ENCODE measurements at regions of chr11 and their contacts with region 1.

Region 1: DNA sequence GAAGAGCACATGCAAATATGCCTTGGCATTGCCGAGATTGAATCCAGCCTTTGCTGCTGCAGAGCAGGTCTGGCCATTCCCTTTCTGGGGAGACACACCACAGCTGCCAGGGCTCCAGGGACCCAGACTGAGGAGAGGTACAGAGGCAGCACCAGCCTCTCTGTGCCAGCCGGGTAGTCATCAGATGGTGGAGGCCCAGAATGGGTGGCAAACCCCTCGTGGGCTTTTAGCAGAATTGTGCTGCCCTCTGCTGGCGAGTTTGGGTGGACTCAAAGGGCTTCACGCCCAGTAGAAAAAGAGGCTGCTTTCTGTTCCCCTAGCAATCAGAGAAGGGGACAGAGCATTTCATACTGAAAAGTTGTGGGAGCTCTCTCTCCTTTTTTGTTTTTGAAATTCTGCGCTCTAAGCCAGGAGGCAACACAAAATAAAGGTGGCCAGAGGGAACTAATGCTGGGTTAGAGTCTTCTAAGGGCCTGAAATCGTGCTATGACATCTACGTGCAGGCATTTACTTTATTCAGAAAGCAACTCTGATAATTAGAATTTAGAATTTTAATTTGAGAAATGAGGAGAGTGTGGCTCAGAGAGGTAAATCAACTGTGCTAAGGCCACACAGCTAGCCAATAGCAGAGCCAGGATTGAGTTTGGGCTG is 158.8 kb upstream of the NAV2 start:
- DNase-seq: peak; percentile 89
- H3K4me3 Mint-ChIP-seq: no peak overlapping the region
- H3K27ac Mint-ChIP-seq: no peak overlapping the region
- H3K4me1 Mint-ChIP-seq: no peaks in the 10 kb centered on the region
- H3K27me3 Mint-ChIP-seq: peaks cover 8% of the 10 kb centered on the region

Region 2: DNA sequence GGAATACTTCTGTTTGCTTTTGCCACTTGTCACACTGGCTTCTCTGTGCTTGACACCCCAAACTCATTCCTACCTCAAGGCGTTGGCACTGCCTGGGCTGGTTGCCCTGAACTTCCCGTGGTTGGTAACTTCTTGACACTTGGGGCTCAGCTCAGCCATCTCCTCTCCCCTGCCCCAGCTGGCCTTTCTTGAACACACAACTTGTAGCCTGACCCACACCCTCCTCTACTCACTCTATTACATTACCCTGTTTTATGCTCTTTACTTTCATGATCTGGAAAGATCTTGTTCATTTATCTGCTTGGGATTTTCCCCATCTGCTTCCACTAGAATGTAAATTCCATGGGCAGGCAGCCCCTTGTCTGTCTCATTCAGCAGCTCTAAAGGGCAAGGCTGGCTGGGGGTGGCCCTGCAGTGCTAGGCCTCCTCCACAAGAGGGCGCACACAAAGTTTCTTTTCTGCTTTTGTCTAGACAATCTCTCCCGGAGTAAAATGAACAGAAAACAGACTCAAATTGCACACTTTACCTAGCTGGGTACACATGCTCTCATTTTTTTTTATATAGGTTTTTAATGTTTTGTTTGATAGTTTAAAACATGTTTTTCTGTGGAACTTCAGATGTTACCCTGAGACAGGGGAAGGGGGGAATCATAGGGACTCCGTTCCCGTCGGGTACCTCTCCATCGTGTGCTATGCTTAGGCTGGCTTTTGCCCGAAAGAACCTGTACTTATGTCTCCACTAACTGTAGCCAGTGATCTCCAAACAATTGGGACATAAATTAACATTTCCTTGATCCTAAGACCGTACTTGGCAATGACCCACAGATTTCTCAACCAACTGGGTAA is 476.8 kb before region 1 on chr11:
- CTCF ChIA-PET with region 1: interaction called, 12 read pairs
- intact Hi-C with region 1: loop called (anchors 1 kb)
- DNase-seq: peak; percentile 81
- H3K4me3 Mint-ChIP-seq: no peak overlapping the region
- H3K27ac Mint-ChIP-seq: no peak overlapping the region
- H3K4me1 Mint-ChIP-seq: peaks cover 1% of the 10 kb centered on the region
- H3K27me3 Mint-ChIP-seq: peaks cover 12% of the 10 kb centered on the region

Region 3: GRCh38 chr11:19259487-19260345 is 294.1 kb before region 1 on chr11:
- CTCF ChIA-PET with region 1: interaction called, 20 read pairs
- intact Hi-C with region 1: loop called (anchors 1 kb)
- DNase-seq: peak; percentile 82
- H3K4me3 Mint-ChIP-seq: no peak overlapping the region
- H3K27ac Mint-ChIP-seq: no peak overlapping the region
- H3K4me1 Mint-ChIP-seq: no peaks in the 10 kb centered on the region
- H3K27me3 Mint-ChIP-seq: peaks cover 7% of the 10 kb centered on the region

Region 4: DNA sequence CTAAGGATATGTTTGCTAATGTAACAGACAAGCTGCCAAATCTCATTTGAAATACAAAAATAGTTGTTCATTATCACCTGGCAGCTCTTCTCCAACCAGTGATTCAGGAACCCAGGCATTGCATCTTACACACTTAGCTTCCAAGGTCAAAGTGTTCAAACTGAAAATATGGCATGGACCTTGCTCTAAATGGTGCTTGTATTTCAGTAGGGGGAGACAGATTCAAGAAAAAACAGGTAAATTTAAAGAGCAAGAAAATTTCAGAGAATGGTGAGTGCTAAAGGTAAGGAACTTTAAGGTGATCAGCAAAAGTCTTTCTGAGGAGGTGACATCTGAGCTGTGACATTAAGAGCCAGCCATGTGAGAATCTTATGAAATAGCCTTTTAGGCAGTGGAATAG is 230.3 kb before region 1 on chr11:
- CTCF ChIA-PET with region 1: interaction called, 3 read pairs
- intact Hi-C with region 1: loop called (anchors 1 kb)
- DNase-seq: no peak
- H3K4me3 Mint-ChIP-seq: no peak overlapping the region
- H3K27ac Mint-ChIP-seq: no peak overlapping the region
- H3K4me1 Mint-ChIP-seq: no peaks in the 10 kb centered on the region
- H3K27me3 Mint-ChIP-seq: peaks cover 8% of the 10 kb centered on the region

Region 5: DNA sequence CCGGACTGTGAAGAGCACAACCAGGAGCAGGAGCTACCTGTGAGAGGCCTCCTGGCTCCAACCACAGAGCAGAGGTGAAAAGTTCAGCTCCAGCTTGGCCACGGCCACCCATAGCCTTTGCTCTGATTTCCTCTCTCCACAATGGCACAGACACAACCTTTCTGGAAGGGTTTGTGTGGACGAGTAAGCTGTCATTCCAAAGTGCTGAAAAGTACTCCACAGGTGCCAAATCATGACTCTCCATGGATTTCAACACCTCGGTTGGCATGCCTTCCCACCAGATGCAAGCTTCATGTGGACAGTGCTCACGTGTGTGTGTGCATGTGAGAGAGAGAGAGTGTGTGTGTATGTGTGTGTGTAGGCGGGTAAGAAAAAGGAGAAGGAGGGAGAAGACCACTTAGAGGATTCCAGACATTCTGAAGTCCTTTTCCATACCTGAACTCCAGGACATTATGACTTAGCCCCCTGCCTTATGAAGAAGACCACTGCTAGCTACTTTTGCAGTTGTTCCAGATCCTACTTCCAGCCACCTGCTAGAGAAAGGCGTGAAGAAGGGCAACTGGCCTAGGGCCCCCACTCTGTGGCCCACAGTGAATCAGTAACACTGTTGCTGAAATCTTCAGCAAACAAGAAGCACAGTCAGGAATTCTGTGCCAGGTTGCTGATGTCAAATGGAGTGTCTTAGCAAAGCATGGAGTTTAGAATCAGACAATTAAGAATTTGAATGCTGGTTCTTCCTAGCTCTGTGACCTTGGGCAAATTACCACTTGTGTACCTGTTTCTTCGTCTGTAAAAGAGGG is 144.9 kb after region 1 on chr11:
- CTCF ChIA-PET with region 1: no interaction called
- intact Hi-C with region 1: no loop called
- DNase-seq: no peak
- H3K4me3 Mint-ChIP-seq: no peak overlapping the region
- H3K27ac Mint-ChIP-seq: no peak overlapping the region
- H3K4me1 Mint-ChIP-seq: no peaks in the 10 kb centered on the region
- H3K27me3 Mint-ChIP-seq: peaks cover 8% of the 10 kb centered on the region

Region 6: GRCh38 chr11:19742588-19743292 is 188.9 kb after region 1 on chr11:
- CTCF ChIA-PET with region 1: interaction called, 25 read pairs
- intact Hi-C with region 1: loop called (anchors 1 kb)
- DNase-seq: peak; percentile 81
- H3K4me3 Mint-ChIP-seq: no peak overlapping the region
- H3K27ac Mint-ChIP-seq: no peak overlapping the region
- H3K4me1 Mint-ChIP-seq: no peaks in the 10 kb centered on the region
- H3K27me3 Mint-ChIP-seq: peaks cover 2% of the 10 kb centered on the region

Region 7: GRCh38 chr11:20355221-20356219 is 801.7 kb after region 1 on chr11:
- CTCF ChIA-PET with region 1: no interaction called
- intact Hi-C with region 1: loop called (anchors 10 kb)
- DNase-seq: peak; percentile 56
- H3K4me3 Mint-ChIP-seq: no peak overlapping the region
- H3K27ac Mint-ChIP-seq: no peak overlapping the region
- H3K4me1 Mint-ChIP-seq: peaks cover 9% of the 10 kb centered on the region
- H3K27me3 Mint-ChIP-seq: no peaks in the 10 kb centered on the region

Region 8: DNA sequence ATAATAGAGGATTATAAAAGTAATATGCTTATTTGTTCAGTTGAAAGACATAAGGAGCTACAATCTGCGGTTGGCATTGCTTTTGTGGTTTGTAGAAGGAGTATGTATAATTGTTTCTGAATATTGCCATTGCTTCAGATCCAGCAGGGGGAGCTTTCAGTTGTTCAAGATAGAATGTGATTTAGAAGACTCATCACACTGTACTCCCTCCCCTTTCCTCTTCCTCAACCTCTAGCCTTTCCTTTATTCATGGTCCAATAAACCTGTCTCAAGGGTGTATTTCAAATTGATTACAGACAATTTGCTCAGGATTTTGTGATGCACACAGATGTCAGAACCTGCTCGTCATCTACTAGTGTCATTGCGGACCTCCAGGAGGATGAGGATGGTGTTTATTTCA is 843.5 kb after region 1 on chr11:
- CTCF ChIA-PET with region 1: no interaction called
- intact Hi-C with region 1: no loop called
- DNase-seq: peak; percentile 23
- H3K4me3 Mint-ChIP-seq: no peak overlapping the region
- H3K27ac Mint-ChIP-seq: no peak overlapping the region
- H3K4me1 Mint-ChIP-seq: peaks cover 10% of the 10 kb centered on the region
- H3K27me3 Mint-ChIP-seq: no peaks in the 10 kb centered on the region